PC-9 (cell line): ENCODE measurements at regions of chr3 and their contacts with region 1.

Region 1: GRCh38 chr3:41198950-41199865 is at the start of gene CTNNB1:
- DNase-seq: peak; percentile 77 to 89
- H3K4me3 ChIP-seq: peak within 1 kb of the TSS; percentile 95
- H3K27ac ChIP-seq: peak within 1 kb of the TSS; percentile 89
- H3K4me1 ChIP-seq: peaks cover 31% of the 10 kb centered on the region
- H3K27me3 ChIP-seq: no peaks in the 10 kb centered on the region
- CTCF ChIP-seq: no peak
- total RNA-seq, gene CTNNB1: 251 and 293 TPM in 2 replicates

Region 2: GRCh38 chr3:40452876-40453730 is 746.1 kb before region 1 on chr3:
- CTCF ChIA-PET with region 1: no interaction called
- POLR2A ChIA-PET with region 1: interaction called, 6 read pairs
- intact Hi-C with region 1: loop called (anchors 5 kb)
- DNase-seq: peak; percentile 95 to 97
- H3K4me3 ChIP-seq: peak overlapping the region; percentile 59
- H3K27ac ChIP-seq: peak overlapping the region; percentile 52
- H3K4me1 ChIP-seq: peaks cover 33% of the 10 kb centered on the region
- H3K27me3 ChIP-seq: no peaks in the 10 kb centered on the region
- CTCF ChIP-seq: no peak

Region 3: GRCh38 chr3:40971191-40972168 is 227.7 kb before region 1 on chr3:
- CTCF ChIA-PET with region 1: interaction called, 11 read pairs
- POLR2A ChIA-PET with region 1: interaction called, 10 read pairs
- intact Hi-C with region 1: loop called (anchors 2 kb)
- DNase-seq: peak; percentile 75 to 98
- H3K4me3 ChIP-seq: no peak overlapping the region; the same call in 1 of the 2 replicates
- H3K27ac ChIP-seq: peak overlapping the region; percentile 92
- H3K4me1 ChIP-seq: peaks cover 32% of the 10 kb centered on the region
- H3K27me3 ChIP-seq: no peaks in the 10 kb centered on the region
- CTCF ChIP-seq: no peak; the same call in 1 of the 2 replicates

Region 4: GRCh38 chr3:41131224-41131623 is 68.0 kb before region 1 on chr3:
- CTCF ChIA-PET with region 1: no interaction called
- POLR2A ChIA-PET with region 1: interaction called, 4 read pairs
- intact Hi-C with region 1: loop called (anchors 2 kb)
- DNase-seq: peak; percentile 75 to 89
- H3K4me3 ChIP-seq: no peak overlapping the region
- H3K27ac ChIP-seq: peak overlapping the region; percentile 76
- H3K4me1 ChIP-seq: peaks cover 15% of the 10 kb centered on the region
- H3K27me3 ChIP-seq: no peaks in the 10 kb centered on the region
- CTCF ChIP-seq: no peak

Region 5: GRCh38 chr3:42080452-42080891 is 881.3 kb after region 1 on chr3:
- CTCF ChIA-PET with region 1: no interaction called
- POLR2A ChIA-PET with region 1: no interaction called
- intact Hi-C with region 1: loop called (anchors 10 kb)
- DNase-seq: peak; percentile 86 to 96
- H3K4me3 ChIP-seq: peak overlapping the region; percentile 31; the same call in 1 of the 2 replicates
- H3K27ac ChIP-seq: peak overlapping the region; percentile 87
- H3K4me1 ChIP-seq: peaks cover 42% of the 10 kb centered on the region
- H3K27me3 ChIP-seq: no peaks in the 10 kb centered on the region
- CTCF ChIP-seq: no peak